HepG2 (cell line): ENCODE measurements at regions of chr19 and their contacts with region 1.

Region 1: GRCh38 chr19:12766051-12766521 is 9.3 kb downstream of the HOOK2 start:
- DNase-seq: peak; percentile 76
- ATAC-seq: peak; percentile 95
- H3K4me3 ChIP-seq: peak overlapping the region; percentile 60 to 87 (median 79)
- H3K27ac ChIP-seq: peak overlapping the region; percentile 50
- H3K4me1 ChIP-seq: 0 out of 2 replicates have a peak, but pooled peaks cover 4% of the 10 kb centered on the region
- H3K27me3 ChIP-seq: no peaks in the 10 kb centered on the region
- CTCF ChIP-seq: peak; percentile 99
- EP300 ChIP-seq: no peak
- POLR2A ChIP-seq: 0 out of 4 replicates have a peak, but pooled peaks of 1 of the 2 experiments have one; percentile 32
- RAD21 ChIP-seq: peak; percentile 92

Region 2: DNA sequence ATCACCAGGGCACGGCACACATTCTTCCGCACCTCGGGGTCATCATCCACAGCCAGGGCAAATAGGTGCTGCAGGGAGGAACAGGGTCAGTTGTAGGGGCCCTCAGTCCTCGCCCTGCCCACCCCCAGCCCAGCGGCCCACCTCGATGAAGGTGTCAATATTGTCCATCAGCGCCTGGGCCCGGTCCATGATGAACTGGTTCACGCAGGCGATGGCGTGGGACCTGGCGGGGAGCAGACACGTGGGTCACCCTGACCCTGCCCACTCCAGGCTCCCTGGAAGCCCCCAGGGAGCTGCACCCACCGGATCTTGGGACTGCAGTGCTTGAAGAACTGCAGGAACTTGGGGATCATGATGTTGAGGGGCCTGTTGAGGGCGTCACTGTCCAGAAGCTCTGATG is 51.0 kb before region 1 on chr19:
- CTCF ChIA-PET with region 1: no interaction called
- POLR2A ChIA-PET with region 1: no interaction called
- in situ Hi-C with region 1: no loop called
- intact Hi-C with region 1: no loop called
- DNase-seq: no peak
- ATAC-seq: no peak
- H3K4me3 ChIP-seq: no peak overlapping the region
- H3K27ac ChIP-seq: no peak overlapping the region
- H3K4me1 ChIP-seq: peaks cover 2% of the 10 kb centered on the region
- H3K27me3 ChIP-seq: no peaks in the 10 kb centered on the region
- CTCF ChIP-seq: no peak
- EP300 ChIP-seq: no peak
- POLR2A ChIP-seq: no peak
- RAD21 ChIP-seq: no peak

Region 3: GRCh38 chr19:12777217-12778016 is 11.3 kb after region 1 on chr19:
- CTCF ChIA-PET with region 1: interaction called, 4 read pairs
- POLR2A ChIA-PET with region 1: interaction called, 13 read pairs
- in situ Hi-C with region 1: no loop called
- intact Hi-C with region 1: no loop called
- DNase-seq: peak; percentile 50
- ATAC-seq: peak; percentile 66
- H3K4me3 ChIP-seq: peak overlapping the region; percentile 76 to 80 (median 79)
- H3K27ac ChIP-seq: no peak overlapping the region
- H3K4me1 ChIP-seq: peaks cover 43% of the 10 kb centered on the region
- H3K27me3 ChIP-seq: no peaks in the 10 kb centered on the region; a peak in 1 of 5 replicates
- CTCF ChIP-seq: peak; percentile 92
- EP300 ChIP-seq: no peak
- POLR2A ChIP-seq: no peak
- RAD21 ChIP-seq: peak; percentile 89

Region 4: GRCh38 chr19:12796146-12797071 is 30.3 kb after region 1 on chr19:
- CTCF ChIA-PET with region 1: interaction called, 34 read pairs
- POLR2A ChIA-PET with region 1: interaction called, 31 read pairs
- in situ Hi-C with region 1: loop called (anchors 5 kb)
- intact Hi-C with region 1: no loop called
- DNase-seq: peak; percentile 68
- ATAC-seq: peak; percentile 28
- H3K4me3 ChIP-seq: peak overlapping the region in 1 of 3 experiments; percentile 24; a peak in 2 of 6 replicates
- H3K27ac ChIP-seq: no peak overlapping the region
- H3K4me1 ChIP-seq: peaks cover 38% of the 10 kb centered on the region
- H3K27me3 ChIP-seq: no peaks in the 10 kb centered on the region; a peak in 1 of 5 replicates
- CTCF ChIP-seq: peak; percentile 98
- EP300 ChIP-seq: no peak
- POLR2A ChIP-seq: 0 out of 4 replicates have a peak, but pooled peaks have one; percentile 22 to 48
- RAD21 ChIP-seq: peak; percentile 96

Region 5: GRCh38 chr19:12806239-12807081 is 40.4 kb after region 1 on chr19 and contains the start of gene RNASEH2A:
- CTCF ChIA-PET with region 1: interaction called, 4 read pairs
- POLR2A ChIA-PET with region 1: interaction called, 4 read pairs
- in situ Hi-C with region 1: loop called (anchors 5 kb)
- intact Hi-C with region 1: no loop called
- DNase-seq: peak; percentile 70
- ATAC-seq: peak; percentile 93
- H3K4me3 ChIP-seq: peak within 1 kb of the TSS; percentile 69 to 87 (median 82)
- H3K27ac ChIP-seq: peak within 1 kb of the TSS; percentile 67
- H3K4me1 ChIP-seq: peaks cover 17% of the 10 kb centered on the region
- H3K27me3 ChIP-seq: no peaks in the 10 kb centered on the region; a peak in 1 of 5 replicates
- CTCF ChIP-seq: peak; percentile 22; the same call in 1 of the 2 replicates
- EP300 ChIP-seq: no peak
- POLR2A ChIP-seq: peak; percentile 67 to 86
- RAD21 ChIP-seq: no peak; the same call in 1 of the 2 replicates
- total RNA-seq, gene RNASEH2A: 35.8 and 44.0 TPM in 2 replicates

Region 6: GRCh38 chr19:12847159-12848139 is 81.4 kb after region 1 on chr19:
- CTCF ChIA-PET with region 1: interaction called, 14 read pairs
- POLR2A ChIA-PET with region 1: no interaction called
- in situ Hi-C with region 1: no loop called
- intact Hi-C with region 1: loop called (anchors 2 kb)
- DNase-seq: peak; percentile 53
- ATAC-seq: peak; percentile 98
- H3K4me3 ChIP-seq: peak overlapping the region in 1 of 3 experiments; percentile 49; a peak in 2 of 6 replicates
- H3K27ac ChIP-seq: no peak overlapping the region
- H3K4me1 ChIP-seq: peaks cover 4% of the 10 kb centered on the region
- H3K27me3 ChIP-seq: no peaks in the 10 kb centered on the region
- CTCF ChIP-seq: peak; percentile 95
- EP300 ChIP-seq: no peak
- POLR2A ChIP-seq: no peak
- RAD21 ChIP-seq: peak; percentile 98

Region 7: DNA sequence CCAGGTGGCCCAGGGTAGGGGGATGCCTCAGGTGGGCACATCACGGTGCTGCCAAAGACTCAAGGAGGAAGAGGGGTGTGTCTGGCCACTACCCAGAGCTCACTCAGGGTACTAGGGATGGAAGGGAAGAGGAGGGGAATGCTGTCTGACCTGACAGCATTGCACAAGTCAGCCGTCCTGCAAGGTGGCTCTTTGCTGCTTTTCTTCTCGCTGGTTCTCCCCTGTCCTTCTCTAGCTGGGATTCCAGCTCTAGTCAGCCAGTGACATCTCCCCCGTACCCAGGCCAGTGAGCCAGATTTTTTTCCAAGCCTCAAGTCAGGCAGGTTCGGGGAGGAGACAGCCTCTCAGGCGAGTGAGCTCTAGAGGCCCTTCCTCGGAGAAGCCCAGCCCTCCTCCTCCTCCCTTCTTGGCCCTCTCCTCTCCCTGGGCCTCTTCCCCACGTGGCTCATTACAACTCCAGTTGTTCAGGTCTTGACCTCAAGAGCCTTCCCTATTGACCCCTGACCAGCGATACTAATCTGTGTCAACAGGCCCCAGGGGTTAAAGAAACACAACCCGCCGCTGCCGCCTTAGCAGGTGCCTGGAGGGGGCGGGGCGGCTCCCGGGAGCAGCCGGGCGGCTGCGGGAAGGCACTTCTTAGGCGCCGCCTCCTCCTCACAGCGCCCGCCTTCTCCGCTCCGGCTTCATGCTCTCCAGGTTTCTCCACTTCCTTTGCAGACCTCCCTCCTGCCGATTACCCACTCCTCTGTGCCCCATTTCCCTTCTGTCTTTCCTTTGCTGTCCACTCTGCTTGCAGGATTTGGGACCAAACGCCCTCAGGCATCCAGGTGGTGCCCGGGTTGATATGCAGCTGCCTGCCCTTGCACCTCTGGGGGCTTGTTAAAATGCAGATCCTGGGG is 285.4 kb after region 1 on chr19:
- CTCF ChIA-PET with region 1: no interaction called
- POLR2A ChIA-PET with region 1: no interaction called
- in situ Hi-C with region 1: no loop called
- intact Hi-C with region 1: no loop called
- DNase-seq: peak; percentile 54
- ATAC-seq: no peak; the same call in 2 of the 3 replicates
- H3K4me3 ChIP-seq: peak overlapping the region in 1 of 3 experiments; percentile 53; a peak in 1 of 6 replicates
- H3K27ac ChIP-seq: no peak overlapping the region
- H3K4me1 ChIP-seq: peaks cover 65% of the 10 kb centered on the region
- H3K27me3 ChIP-seq: no peaks in the 10 kb centered on the region
- CTCF ChIP-seq: no peak; the same call in 1 of the 2 replicates
- EP300 ChIP-seq: peak in 1 of 2 experiments; percentile 85; a peak in 2 of 4 replicates
- POLR2A ChIP-seq: no peak
- RAD21 ChIP-seq: peak; percentile 19; the same call in 1 of the 2 replicates